Dorsolateral prefrontal cortex (tissue), 120 donors: ENCODE measurements at regions of chr3 and their contacts with region 1.

Region 1: GRCh38 chr3:71069797-71070196 is 513.7 kb downstream of the FOXP1 start:
- DNase-seq: peak in 7 of 10 donors; percentile 35 to 72 (median 62)
- H3K4me3 ChIP-seq: no peak overlapping the region
- H3K27ac ChIP-seq: peak overlapping the region in 34 of 59 donors; percentile 8 to 78 (median 52)
- H3K27me3 ChIP-seq: no peaks in the 10 kb centered on the region
- CTCF ChIP-seq: peak; percentile 23 to 88 (median 61)

Region 2: DNA sequence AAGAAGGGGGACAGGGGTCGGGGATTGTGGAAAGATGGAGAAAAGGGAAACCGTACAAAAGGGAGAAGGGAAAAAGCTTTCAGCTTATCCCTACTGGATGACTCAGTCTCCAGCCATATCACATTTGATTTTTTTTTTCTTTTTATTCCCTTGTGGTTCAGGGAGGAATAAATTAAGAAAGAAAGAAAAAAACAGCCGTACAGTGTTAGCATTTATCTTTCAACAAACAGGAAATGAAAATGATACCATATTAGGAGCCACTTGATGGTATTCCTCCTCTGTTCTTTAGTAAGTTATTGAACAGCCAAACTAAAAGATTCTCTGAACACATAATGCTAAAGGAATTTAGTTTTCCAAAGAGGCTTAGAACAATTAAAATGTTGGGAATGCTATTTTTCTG is 80.6 kb before region 1 on chr3:
- intact Hi-C with region 1: no loop called
- DNase-seq: no peak
- H3K4me3 ChIP-seq: no peak overlapping the region
- H3K27ac ChIP-seq: peak overlapping the region in 17 of 59 donors; percentile 3 to 75 (median 32)
- H3K27me3 ChIP-seq: no peaks in the 10 kb centered on the region
- CTCF ChIP-seq: no peak

Region 3: DNA sequence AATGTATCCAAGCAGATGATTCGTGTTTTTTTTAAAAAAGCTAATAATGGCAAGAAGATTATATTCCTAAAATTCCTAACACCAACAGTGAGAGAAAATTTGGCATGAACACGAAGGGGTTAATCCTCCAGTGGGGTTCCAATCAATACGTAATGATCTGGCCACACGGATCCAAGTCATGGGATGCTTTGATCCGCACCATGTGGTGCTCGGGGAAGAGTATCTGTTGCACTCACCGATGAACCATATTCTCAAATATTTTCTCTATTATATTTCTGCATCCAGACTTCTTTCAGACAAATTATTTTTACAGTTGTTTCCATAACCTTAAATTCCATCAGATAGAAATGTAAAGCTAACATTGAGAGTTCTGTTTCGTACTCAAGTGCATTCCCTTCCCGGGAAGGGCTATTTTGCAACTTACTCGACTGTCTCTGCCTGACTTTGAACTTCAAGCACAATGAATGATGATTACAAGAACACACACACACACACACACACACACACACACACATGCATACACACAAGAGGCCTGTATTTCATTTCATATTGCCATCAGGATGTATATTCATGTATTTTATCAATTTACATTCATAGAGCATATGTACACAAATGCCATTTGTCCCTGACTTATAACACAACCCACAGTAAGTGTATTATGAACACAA is 53.5 kb before region 1 on chr3:
- intact Hi-C with region 1: loop called (anchors 5 kb)
- DNase-seq: no peak
- H3K4me3 ChIP-seq: peak overlapping the region in 9 of 59 donors; percentile 3 to 40 (median 26)
- H3K27ac ChIP-seq: peak overlapping the region in 55 of 59 donors; percentile 3 to 91 (median 73)
- H3K27me3 ChIP-seq: no peaks in the 10 kb centered on the region
- CTCF ChIP-seq: no peak

Region 4: GRCh38 chr3:71022551-71023335 is 47.1 kb before region 1 on chr3:
- intact Hi-C with region 1: loop called (anchors 5 kb)
- DNase-seq: peak in 1 of 10 donors; percentile 40
- H3K4me3 ChIP-seq: no peak overlapping the region
- H3K27ac ChIP-seq: peak overlapping the region in 44 of 59 donors; percentile 1 to 91 (median 47)
- H3K27me3 ChIP-seq: no peaks in the 10 kb centered on the region
- CTCF ChIP-seq: peak in 52 of 56 donors; percentile 21 to 70 (median 48)